ENCODE measurements at regions of chr5 and their contacts with region 1.

Region 1: GRCh38 chr5:108681079-108681921 is 66.4 kb upstream of the FER start:
- DNase-seq: no peak
- ATAC-seq: peak; percentile 93
- H3K4me3 ChIP-seq: no peak overlapping the region
- H3K27ac ChIP-seq: peak overlapping the region in 1 of 2 donors; percentile 12
- H3K4me1 ChIP-seq: no peaks in the 10 kb centered on the region
- H3K27me3 ChIP-seq: no peaks in the 10 kb centered on the region

Region 2: GRCh38 chr5:108748401-108749127 is 67.3 kb after region 1 on chr5:
- intact Hi-C with region 1: loop called in 1 of 2 experiments (anchors 5 kb)
- DNase-seq: peak; percentile 99 to 100
- ATAC-seq: peak; percentile 99
- H3K4me3 ChIP-seq: peak overlapping the region; percentile 46 to 90
- H3K27ac ChIP-seq: peak overlapping the region; percentile 85 to 97
- H3K4me1 ChIP-seq: no peaks in the 10 kb centered on the region
- H3K27me3 ChIP-seq: no peaks in the 10 kb centered on the region

Region 3: GRCh38 chr5:109468737-109469420 is 787.6 kb after region 1 on chr5:
- intact Hi-C with region 1: loop called in 1 of 2 experiments (anchors 10 kb)
- DNase-seq: peak; percentile 98 to 99
- ATAC-seq: peak; percentile 95
- H3K4me3 ChIP-seq: no peak overlapping the region
- H3K27ac ChIP-seq: no peak overlapping the region
- H3K4me1 ChIP-seq: no peaks in the 10 kb centered on the region
- H3K27me3 ChIP-seq: no peaks in the 10 kb centered on the region